Activated CD8-positive, alpha-beta memory T cell treated with anti-CD3 and anti-CD28 coated beads, Interleukin-2, amount 10 ng/mL, durations not matched to agents 7 days and 5 days (primary cell): ENCODE measurements at regions of chr2 and their contacts with region 1.

Region 1: DNA sequence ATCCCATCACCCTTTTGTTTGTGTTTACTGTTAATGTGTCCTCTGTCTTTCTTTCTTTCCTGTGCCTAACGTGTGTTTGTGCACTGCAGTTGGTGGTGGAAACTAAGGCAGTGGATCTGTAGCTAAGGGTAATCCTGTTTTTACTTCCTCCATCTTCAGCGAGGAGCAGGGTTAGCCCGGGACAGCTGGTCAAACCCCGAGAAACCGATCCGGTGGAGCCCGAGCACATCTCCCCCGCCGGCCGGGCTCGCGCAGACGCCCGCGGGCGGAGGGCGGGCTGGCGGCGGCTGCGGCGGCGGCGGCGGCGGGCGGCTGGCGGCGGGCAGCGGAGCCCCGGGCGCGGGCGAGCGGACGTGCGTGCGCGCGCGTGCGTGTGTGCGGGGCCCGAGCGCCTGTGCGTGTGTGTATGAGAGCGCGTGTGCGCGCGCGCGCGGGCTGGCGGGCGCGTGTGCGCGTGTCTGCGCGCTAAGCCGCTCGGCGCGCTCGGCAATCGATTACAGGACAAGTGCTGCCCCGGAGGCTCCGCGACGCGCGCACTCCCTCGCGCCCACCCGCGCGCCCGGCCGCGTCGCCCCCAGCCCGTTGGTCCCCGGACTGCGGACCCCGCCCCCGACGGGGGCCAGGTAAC is at the start of gene IKZF2:
- DNase-seq: peak; percentile 74
- ATAC-seq: peak; percentile 81
- H3K4me3 Mint-ChIP-seq: peak within 1 kb of the TSS; percentile 90
- H3K27ac Mint-ChIP-seq: peak within 1 kb of the TSS; percentile 85
- H3K4me1 Mint-ChIP-seq: peaks cover 30% of the 10 kb centered on the region
- H3K27me3 Mint-ChIP-seq: peaks cover 59% of the 10 kb centered on the region
- total RNA-seq, gene IKZF2: 14.7 to 41.4 TPM

Region 2: DNA sequence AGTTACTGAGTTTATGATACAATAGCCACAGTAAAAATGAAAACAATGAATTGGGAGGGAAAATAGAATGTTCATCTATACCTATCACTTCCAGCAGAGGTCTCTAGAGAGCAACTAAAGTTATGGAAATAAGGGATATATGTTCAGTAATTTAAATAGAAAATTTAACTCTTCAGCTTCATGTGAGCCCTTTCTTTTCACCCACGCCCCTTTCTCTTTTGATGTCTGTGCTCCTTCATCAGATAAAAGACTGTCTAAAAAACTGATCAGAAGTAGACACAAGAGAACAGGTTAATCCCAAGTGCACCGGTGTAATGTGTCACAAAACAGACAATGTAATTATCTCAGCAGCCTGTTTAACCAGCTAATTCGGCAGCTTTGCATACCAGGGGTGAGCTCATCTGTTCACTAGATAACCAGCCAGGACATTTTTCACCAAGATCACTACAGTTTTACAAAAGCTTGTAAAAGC is 374.5 kb before region 1 on chr2:
- CTCF ChIA-PET with region 1: interaction called, 13 read pairs
- DNase-seq: no peak
- ATAC-seq: no peak
- H3K4me3 Mint-ChIP-seq: no peak overlapping the region
- H3K27ac Mint-ChIP-seq: no peak overlapping the region
- H3K4me1 Mint-ChIP-seq: no peaks in the 10 kb centered on the region
- H3K27me3 Mint-ChIP-seq: no peaks in the 10 kb centered on the region

Region 3: DNA sequence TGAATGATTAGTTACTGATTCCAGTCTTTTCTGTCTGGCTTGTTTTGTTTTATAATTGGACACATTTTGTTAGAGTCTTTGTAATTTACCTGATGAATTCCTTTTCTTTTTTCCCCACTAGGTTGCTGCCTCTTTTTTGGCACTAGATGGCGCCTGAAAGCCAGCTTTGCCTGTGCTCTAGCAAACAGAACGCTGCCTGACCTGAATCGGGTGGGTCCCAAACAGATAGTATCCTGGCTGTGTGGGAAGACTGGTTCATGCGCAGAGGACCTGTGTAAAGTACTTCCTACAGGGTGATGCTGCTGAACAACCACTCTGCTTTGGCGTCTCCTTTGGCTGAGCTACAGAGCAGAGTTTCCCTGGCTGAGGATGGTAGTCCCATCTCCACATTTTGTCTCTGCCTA is 288.4 kb before region 1 on chr2:
- CTCF ChIA-PET with region 1: interaction called, 15 read pairs
- DNase-seq: peak; percentile 49
- ATAC-seq: no peak
- H3K4me3 Mint-ChIP-seq: no peak overlapping the region
- H3K27ac Mint-ChIP-seq: no peak overlapping the region
- H3K4me1 Mint-ChIP-seq: no peaks in the 10 kb centered on the region
- H3K27me3 Mint-ChIP-seq: no peaks in the 10 kb centered on the region